Psoas muscle (tissue), 8 donors: ENCODE measurements at regions of chr3 and their contacts with region 1.

Region 1: DNA sequence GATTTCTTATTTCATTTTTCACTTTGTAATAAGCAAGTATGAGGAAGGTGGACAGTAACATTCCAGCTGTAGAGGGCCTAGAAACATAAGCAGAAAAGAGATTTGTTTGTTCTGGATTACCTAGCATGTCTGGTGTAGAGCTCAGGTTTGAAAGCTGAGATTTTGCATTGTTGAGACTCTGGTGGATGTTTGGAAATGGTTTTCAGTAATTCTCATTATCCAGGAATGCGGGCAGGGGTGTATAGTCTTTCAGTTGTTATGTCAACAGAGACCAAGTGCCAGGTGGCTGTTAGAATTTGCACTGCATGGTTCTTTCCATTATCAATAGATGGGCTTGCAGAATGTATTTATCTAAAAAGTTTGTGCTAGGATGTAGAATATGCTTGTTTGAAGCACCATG is 10.9 kb downstream of the GPD1L start:
- DNase-seq: no peak
- ATAC-seq: peak in 2 of 4 donors; percentile 19 to 47
- H3K4me3 ChIP-seq: no peak overlapping the region
- H3K27ac ChIP-seq: no peak overlapping the region
- H3K4me1 ChIP-seq: peaks cover 65% of the 10 kb centered on the region
- H3K27me3 ChIP-seq: no peaks in the 10 kb centered on the region
- CTCF ChIP-seq: no peak

Region 2: DNA sequence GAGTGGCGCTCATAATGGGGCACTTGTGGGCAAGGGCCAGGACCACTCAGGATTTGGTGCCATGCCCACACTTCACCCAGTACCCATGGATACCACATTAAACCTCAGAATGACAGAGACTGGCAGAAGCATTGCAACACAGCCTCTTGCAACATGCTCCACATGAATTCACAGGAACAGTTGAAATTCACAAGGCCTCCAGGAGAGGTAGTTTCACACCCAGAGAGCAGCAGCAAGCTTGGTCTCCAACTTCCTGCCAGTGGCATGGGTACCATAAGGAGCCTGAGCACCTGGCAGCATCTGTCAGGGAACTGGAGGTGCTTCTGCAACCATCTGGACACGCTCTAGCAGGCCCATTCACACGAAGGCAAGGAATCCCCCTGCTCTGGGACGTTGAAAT is 237.3 kb before region 1 on chr3:
- intact Hi-C with region 1: no loop called
- DNase-seq: no peak
- ATAC-seq: no peak
- H3K4me3 ChIP-seq: no peak overlapping the region
- H3K27ac ChIP-seq: no peak overlapping the region
- H3K4me1 ChIP-seq: no peaks in the 10 kb centered on the region
- H3K27me3 ChIP-seq: no peaks in the 10 kb centered on the region
- CTCF ChIP-seq: no peak

Region 3: GRCh38 chr3:32037929-32038267 is 79.4 kb before region 1 on chr3:
- intact Hi-C with region 1: loop called in 1 of 2 experiments (anchors 5 kb)
- DNase-seq: no peak
- ATAC-seq: peak in 1 of 4 donors; percentile 26
- H3K4me3 ChIP-seq: no peak overlapping the region
- H3K27ac ChIP-seq: peak overlapping the region; percentile 82
- H3K4me1 ChIP-seq: peaks cover 14% of the 10 kb centered on the region
- H3K27me3 ChIP-seq: no peaks in the 10 kb centered on the region
- CTCF ChIP-seq: no peak

Region 4: DNA sequence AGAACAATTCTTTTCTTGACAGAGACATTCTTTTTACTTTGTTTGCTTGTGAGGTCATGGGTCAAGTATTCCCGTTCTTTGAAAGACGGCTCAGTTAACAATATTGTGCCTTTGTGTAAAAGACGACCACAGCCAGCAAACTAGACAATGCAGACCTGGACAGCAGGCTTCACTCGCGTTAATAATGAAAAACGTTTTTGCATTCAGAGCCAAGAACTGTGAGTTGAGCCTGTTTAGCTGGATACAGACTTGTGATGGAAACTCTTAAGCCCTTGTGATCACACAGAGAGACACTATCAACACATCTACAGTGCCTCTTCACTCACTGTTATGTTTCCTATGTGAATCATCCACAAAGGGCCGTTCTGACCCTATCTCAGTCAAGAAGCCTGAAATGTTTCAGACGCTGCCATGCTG is 237.0 kb after region 1 on chr3:
- intact Hi-C with region 1: no loop called
- DNase-seq: no peak
- ATAC-seq: no peak
- H3K4me3 ChIP-seq: no peak overlapping the region
- H3K27ac ChIP-seq: no peak overlapping the region
- H3K4me1 ChIP-seq: no peaks in the 10 kb centered on the region
- H3K27me3 ChIP-seq: no peaks in the 10 kb centered on the region
- CTCF ChIP-seq: no peak